OCI-LY7 (cell line): ENCODE measurements at regions of chr16 and their contacts with region 1.

Region 1: DNA sequence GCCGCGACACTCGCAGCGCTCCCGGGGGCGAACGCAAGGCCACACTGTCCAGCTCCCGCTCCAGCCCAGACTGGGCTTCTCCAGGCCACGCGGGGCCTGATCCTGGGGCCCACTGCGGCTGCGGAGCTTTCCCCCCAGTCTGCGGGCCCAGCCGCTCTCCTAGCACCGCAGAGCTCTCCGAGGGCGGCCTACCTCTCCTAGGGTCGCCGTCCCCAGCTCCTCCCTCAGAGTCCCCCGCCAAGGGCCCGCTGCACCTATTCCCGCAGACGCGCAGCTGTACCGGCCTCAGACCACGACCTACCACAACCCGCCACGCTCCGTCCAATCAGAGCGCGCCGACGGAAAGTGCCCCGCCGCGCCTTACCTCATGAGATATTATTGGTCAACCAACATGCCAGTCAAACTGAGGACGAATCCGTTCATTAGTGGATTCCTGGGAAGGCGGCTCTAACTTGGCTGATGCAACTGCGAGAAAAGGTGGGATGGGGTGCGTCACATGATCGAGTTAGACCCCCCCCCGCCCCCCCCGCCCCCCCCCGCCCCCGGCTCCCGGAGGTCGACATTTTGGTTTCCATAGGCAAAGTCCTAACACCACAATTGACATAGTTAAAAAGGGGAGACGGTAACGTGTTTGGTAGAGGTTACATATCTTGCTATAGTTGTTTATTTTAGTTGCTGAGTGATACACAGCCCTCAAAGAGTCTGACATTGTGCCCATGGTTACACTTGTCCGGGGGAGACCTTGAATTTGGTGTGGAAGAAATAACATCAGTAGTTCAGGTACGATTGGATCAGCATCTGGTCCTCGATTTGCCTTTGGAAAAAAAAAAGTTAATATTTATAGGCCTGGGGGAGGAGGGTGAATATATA is at the start of gene AARS1:
- DNase-seq: peak; percentile 100
- H3K4me3 ChIP-seq: peak within 1 kb of the TSS; percentile 83
- H3K27ac ChIP-seq: peak within 1 kb of the TSS; percentile 85
- H3K4me1 ChIP-seq: peaks cover 22% of the 10 kb centered on the region
- CTCF ChIP-seq: no peak
- total RNA-seq, gene AARS1: 182 and 185 TPM in 2 replicates

Region 2: DNA sequence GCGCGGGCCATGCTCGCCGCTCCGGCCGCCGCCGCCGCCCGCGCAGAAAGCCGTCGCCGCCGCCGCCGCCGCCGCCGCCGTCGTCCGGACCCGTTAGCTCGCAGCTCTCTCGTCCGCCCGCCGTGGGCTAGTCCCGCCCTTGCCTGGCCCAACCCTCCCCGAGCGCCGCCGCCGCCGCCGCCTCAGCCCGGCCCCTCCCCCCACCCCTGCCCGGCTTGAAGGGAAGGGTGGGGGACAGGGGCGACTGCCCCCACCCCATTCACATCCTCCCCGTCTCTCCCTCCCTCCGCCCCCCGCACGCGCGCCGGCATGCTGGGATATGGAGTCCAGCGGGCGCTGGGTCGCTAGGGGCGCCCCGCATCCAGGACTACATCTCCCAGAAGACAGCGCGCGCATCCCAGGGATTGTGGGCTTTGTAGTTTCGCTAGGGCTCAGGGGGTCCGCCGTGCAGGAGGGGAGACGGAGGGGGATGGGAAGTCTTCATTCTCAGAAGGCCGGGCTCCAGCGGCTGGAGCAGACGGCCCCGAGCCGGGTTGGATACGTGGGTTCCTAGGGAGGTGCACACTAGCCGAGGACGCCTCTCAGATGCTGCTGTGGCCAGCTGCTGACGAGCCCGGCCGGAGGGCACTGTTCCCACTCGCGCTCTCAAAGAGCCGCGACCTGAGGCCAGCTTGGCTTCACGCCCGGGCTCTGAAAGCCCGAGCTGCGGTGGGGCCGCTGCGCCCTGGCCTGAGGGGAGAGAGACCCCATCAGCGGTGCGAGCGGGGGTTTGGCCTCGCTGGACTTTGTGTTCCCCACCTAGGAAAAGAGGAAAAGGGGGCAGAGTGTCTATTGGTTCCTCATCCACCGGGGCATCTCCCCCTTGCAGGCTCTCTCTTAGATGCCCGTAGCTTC is 149.8 kb after region 1 on chr16 and contains the start of gene ST3GAL2:
- CTCF ChIA-PET with region 1: no interaction called
- POLR2A ChIA-PET with region 1: no interaction called
- intact Hi-C with region 1: loop called (anchors 2 kb)
- DNase-seq: peak; percentile 96
- H3K4me3 ChIP-seq: peak within 1 kb of the TSS; percentile 97
- H3K27ac ChIP-seq: peak within 1 kb of the TSS; percentile 68
- H3K4me1 ChIP-seq: peaks cover 31% of the 10 kb centered on the region
- CTCF ChIP-seq: no peak
- total RNA-seq, gene ST3GAL2: 42.6 and 44.6 TPM in 2 replicates

Region 3: DNA sequence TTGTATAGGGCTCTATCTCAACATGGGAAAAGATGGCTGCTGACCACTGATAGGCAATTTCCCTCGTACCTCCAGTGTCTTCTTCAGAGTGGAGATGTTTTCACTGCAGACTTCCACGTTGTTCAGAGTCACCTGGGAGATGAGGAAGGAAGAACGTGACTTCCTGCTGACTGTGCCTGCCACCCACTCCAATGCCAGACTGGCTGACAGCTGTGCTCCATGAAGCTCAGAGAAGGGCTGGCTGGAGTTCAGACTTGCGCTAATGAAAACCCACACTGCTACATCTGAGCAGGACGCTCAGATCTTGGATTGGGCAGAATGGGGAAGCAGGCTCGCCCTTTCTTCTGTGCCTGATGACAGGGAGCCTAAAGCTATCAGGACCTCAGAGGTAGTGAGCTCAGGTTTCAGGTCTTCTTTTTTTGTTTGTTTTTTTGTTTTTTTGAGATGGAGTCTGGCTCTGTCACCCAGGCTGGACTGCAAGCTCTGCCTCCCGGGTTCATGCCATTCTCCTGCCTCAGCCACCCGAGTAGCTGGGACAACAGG is 200.9 kb after region 1 on chr16:
- CTCF ChIA-PET with region 1: no interaction called
- POLR2A ChIA-PET with region 1: no interaction called
- intact Hi-C with region 1: no loop called
- DNase-seq: no peak
- H3K4me3 ChIP-seq: no peak overlapping the region
- H3K27ac ChIP-seq: no peak overlapping the region
- H3K4me1 ChIP-seq: peaks cover 22% of the 10 kb centered on the region
- CTCF ChIP-seq: no peak

Region 4: DNA sequence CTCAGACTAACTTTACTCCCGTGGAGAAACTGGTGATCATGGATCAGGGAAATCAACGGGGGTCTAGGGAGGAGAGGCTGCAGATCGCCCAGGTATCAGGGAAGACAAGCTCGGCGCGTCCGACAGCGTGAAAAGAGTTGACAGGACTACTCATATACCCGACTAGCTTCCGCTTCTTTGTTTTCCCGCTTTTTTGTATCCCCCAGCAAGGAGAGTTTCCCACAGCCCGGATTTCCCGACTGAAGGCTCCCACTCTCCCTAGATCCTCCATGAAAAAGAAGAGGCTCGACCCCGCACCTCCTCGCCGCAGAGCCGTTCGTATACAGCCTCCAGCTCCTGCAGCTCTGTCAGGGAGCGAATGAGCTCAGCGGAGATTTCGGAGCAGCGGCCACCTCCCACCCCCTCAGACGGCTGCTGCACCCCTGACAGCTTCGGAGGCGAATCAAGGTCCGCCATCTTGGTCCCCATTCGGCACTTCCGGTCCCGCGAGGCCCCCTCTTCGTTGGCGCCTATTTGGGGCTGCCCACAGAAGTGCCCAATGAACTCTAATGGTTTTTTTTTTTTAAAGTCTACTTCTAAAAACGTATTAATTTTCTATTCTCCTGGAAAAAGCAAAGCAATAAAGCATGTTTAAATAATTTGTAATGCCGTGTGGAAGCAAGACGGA is 233.7 kb after region 1 on chr16 and contains the start of gene COG4:
- CTCF ChIA-PET with region 1: no interaction called
- POLR2A ChIA-PET with region 1: interaction called, 6 read pairs
- intact Hi-C with region 1: loop called (anchors 2 kb)
- DNase-seq: peak; percentile 95
- H3K4me3 ChIP-seq: peak within 1 kb of the TSS; percentile 99
- H3K27ac ChIP-seq: peak within 1 kb of the TSS; percentile 88
- H3K4me1 ChIP-seq: peaks cover 47% of the 10 kb centered on the region
- CTCF ChIP-seq: no peak
- total RNA-seq, gene COG4: 41.9 and 48.8 TPM in 2 replicates